IMR-90 (cell line): ENCODE measurements at regions of chr3 and their contacts with region 1.

Region 1: DNA sequence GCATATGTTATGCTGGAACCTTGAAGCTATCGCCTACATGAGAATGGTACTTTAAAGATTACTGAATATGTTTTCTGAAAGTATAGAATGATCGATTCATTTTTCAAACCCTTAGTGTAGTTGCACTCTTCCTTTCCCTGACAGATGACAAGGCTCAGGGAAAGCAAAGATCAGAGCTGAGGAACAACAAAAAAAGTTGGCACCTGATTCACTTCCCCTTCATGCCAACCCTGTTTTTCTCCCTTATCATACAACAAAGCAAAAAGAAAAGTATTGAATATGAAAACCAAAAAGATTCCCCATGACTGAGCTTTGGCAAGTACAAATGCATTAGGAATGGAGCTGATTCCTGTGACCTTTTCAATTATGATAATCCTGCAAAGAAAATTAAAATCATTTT is 1012.7 kb downstream of the FHIT start:
- DNase-seq: no peak
- ATAC-seq: no peak
- H3K4me3 ChIP-seq: no peak overlapping the region
- H3K27ac ChIP-seq: no peak overlapping the region
- H3K4me1 ChIP-seq: no peaks in the 10 kb centered on the region
- H3K27me3 ChIP-seq: no peaks in the 10 kb centered on the region
- CTCF ChIP-seq: no peak
- POLR2A ChIP-seq: no peak
- RAD21 ChIP-seq: no peak

Region 2: GRCh38 chr3:60197671-60198070 is 40.9 kb before region 1 on chr3:
- CTCF ChIA-PET with region 1: interaction called, 3 read pairs
- POLR2A ChIA-PET with region 1: interaction called, 10 read pairs
- dilution Hi-C with region 1: no loop called
- in situ Hi-C with region 1: no loop called
- intact Hi-C with region 1: no loop called
- DNase-seq: no peak
- ATAC-seq: no peak
- H3K4me3 ChIP-seq: no peak overlapping the region
- H3K27ac ChIP-seq: no peak overlapping the region
- H3K4me1 ChIP-seq: no peaks in the 10 kb centered on the region
- H3K27me3 ChIP-seq: no peaks in the 10 kb centered on the region
- CTCF ChIP-seq: no peak
- POLR2A ChIP-seq: no peak
- RAD21 ChIP-seq: no peak

Region 3: GRCh38 chr3:60226912-60227311 is 11.6 kb before region 1 on chr3:
- CTCF ChIA-PET with region 1: no interaction called
- POLR2A ChIA-PET with region 1: no interaction called
- dilution Hi-C with region 1: no loop called
- in situ Hi-C with region 1: no loop called
- intact Hi-C with region 1: no loop called
- DNase-seq: no peak
- ATAC-seq: no peak
- H3K4me3 ChIP-seq: no peak overlapping the region
- H3K27ac ChIP-seq: no peak overlapping the region
- H3K4me1 ChIP-seq: no peaks in the 10 kb centered on the region
- H3K27me3 ChIP-seq: no peaks in the 10 kb centered on the region
- CTCF ChIP-seq: no peak
- POLR2A ChIP-seq: no peak
- RAD21 ChIP-seq: no peak